A549 (cell line): ENCODE measurements at regions of chr14 and their contacts with region 1.

Region 1: DNA sequence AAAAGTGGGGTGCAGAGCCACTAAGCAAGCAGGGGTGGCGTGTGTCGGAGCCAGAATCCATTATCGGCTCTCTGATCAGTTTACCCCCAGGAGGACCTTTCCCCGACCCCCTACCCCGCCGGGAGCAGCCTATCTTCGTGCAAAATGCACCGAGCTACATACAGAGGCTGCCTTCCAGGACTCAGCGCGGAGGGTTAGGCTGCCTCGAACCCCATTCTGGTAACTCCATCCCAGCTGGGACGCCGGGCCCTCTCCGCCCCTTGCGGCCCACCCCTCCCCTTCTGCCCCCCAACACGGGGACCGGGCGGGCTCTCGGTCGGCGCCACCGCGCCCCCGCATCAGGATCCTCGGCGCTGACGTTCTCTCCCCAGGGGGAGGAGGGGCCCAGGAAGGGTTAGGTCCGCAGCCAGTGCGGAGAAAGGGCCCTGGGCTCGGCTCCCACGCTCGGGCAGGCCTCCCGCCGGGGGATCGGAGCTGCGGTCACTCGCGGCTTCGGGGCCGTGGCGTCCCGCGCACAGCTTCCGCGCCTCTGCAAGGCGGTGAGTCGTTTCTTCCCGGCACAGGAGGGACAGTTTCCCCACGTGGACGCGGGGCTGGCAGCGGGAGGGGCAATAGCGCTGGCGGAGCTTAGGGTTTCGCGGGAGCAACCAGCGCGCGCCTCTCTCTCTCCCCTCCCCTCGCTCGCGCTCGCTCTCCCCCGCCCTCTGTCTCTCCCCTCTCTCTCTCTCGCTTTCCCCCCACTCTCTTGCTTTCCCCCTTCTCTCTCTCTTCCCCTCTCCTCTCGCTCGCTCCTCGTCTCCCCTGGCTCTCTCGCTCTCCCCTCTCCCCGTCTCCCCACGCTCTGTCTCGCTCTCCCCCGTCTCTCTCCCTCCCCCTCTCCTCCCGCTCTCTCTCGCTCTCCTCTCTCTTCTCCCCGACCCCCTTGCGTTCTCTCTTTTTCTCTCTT is 12.5 kb upstream of the MAP3K9 start:
- DNase-seq: peak; percentile 42 to 62
- ATAC-seq: peak; percentile 58 to 71
- H3K4me3 ChIP-seq: peak overlapping the region; percentile 94
- H3K27ac ChIP-seq: peak overlapping the region; percentile 89 to 97
- H3K4me1 ChIP-seq: peaks cover 14% of the 10 kb centered on the region; the same call in 2 of the 3 replicates
- CTCF ChIP-seq: no peak
- EP300 ChIP-seq: no peak
- POLR2A ChIP-seq: no peak; the same call in 1 of the 2 replicates
- RAD21 ChIP-seq: no peak

Region 2: DNA sequence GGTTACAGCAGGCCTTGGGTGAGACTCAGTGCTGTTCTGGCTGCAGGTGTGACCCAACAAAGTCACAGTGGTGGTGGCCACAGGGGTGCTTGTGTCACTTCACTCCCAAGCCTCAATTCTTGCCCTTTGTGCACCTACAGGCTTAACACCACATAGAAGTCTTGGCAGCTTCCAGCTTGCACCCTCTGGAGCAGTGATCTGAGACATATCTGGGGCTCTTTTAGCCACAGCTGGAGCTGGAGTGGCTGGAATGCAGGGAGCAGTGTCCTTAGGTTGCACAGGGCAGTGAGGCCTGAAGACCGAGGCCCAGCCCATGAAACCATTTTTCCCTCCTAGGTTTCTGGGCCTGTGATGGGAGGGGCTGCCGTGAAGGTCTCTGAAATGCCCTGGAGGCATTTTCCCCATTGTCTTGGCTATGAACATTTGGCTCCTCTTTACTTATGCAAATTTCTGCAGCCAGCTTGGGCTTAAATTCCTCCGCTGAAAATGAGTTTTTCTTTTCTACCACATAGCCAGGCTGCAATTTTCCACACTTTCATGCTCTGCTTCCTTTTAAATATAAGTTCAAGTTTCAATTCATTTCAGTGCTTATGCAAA is 332.2 kb before region 1 on chr14:
- CTCF ChIA-PET with region 1: no interaction called
- POLR2A ChIA-PET with region 1: no interaction called
- DNase-seq: no peak
- ATAC-seq: no peak
- H3K4me3 ChIP-seq: no peak overlapping the region
- H3K27ac ChIP-seq: no peak overlapping the region
- H3K4me1 ChIP-seq: no peaks in the 10 kb centered on the region
- CTCF ChIP-seq: no peak
- EP300 ChIP-seq: no peak
- POLR2A ChIP-seq: no peak
- RAD21 ChIP-seq: no peak

Region 3: GRCh38 chr14:70527501-70528105 is 294.3 kb before region 1 on chr14:
- CTCF ChIA-PET with region 1: no interaction called
- POLR2A ChIA-PET with region 1: no interaction called
- DNase-seq: no peak
- ATAC-seq: no peak
- H3K4me3 ChIP-seq: no peak overlapping the region
- H3K27ac ChIP-seq: no peak overlapping the region
- H3K4me1 ChIP-seq: no peaks in the 10 kb centered on the region
- CTCF ChIP-seq: no peak
- EP300 ChIP-seq: no peak
- POLR2A ChIP-seq: no peak
- RAD21 ChIP-seq: no peak

Region 4: GRCh38 chr14:70600382-70601157 is 221.3 kb before region 1 on chr14 and contains the start of gene MED6:
- CTCF ChIA-PET with region 1: interaction called, 18 read pairs
- POLR2A ChIA-PET with region 1: interaction called, 3 read pairs
- DNase-seq: peak; percentile 78 to 94
- ATAC-seq: peak; percentile 97 to 98
- H3K4me3 ChIP-seq: peak within 1 kb of the TSS; percentile 99
- H3K27ac ChIP-seq: peak within 1 kb of the TSS; percentile 93 to 96
- H3K4me1 ChIP-seq: peaks cover 14% of the 10 kb centered on the region
- CTCF ChIP-seq: no peak
- EP300 ChIP-seq: no peak
- POLR2A ChIP-seq: peak; percentile 5; the same call in 1 of the 2 replicates
- RAD21 ChIP-seq: no peak; a peak in 1 of 5 replicates
- polyA plus RNA-seq, gene MED6: 74.6 and 85.5 TPM in 2 replicates

Region 5: DNA sequence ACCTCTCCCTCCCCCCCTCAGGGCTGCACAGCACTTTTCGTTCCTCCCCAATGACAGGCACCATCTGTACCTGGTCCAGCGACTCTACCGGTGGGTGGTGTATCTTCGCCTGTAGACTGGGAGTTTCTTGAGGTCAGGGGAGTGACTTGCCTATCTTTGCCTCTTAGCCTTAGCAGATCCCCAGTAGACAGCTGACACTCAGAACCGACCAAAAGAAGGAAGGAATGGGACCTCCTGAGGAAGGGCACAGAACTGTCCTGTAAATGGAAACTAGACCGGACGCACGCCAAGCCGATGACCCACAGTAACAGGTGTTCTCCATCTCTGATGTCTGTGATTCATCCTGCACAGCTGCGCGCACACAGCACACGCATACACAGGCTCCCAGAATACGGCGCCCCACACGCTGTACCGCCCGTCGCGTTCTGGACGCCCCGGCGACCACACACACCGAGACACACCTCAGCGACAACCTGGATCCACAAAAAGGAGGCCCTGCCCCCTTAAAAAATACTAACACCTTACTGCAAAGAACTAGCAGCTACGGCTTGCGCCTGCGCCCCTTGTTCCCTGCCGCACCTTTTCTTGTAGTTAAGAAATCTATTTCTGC is 180.8 kb before region 1 on chr14:
- CTCF ChIA-PET with region 1: interaction called, 13 read pairs
- POLR2A ChIA-PET with region 1: no interaction called
- DNase-seq: peak; percentile 47 to 61
- ATAC-seq: peak; percentile 86 to 92
- H3K4me3 ChIP-seq: peak overlapping the region; percentile 69
- H3K27ac ChIP-seq: peak overlapping the region; percentile 70 to 92
- H3K4me1 ChIP-seq: peaks cover 11% of the 10 kb centered on the region; the same call in 1 of the 3 replicates
- CTCF ChIP-seq: no peak
- EP300 ChIP-seq: no peak
- POLR2A ChIP-seq: no peak
- RAD21 ChIP-seq: no peak

Region 6: DNA sequence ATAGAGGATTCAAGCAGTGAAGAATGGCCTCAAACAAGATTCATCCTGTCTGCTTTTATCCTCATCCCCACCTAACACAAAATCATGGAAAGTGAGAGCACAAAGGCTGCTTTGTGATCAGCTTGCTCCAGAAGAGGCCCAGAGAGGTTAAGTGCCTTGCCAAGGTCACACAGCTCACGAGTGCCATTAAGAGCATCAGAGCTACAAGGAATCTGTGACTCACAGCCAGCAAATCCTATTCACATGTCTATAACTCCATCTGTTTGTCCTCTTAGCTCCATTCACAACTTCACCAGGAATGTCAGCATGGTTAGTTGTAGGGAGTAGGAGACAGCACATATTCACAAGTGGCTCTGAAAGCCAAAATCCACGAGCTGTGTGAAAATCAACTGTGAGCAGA is 100.3 kb before region 1 on chr14:
- CTCF ChIA-PET with region 1: interaction called, 12 read pairs
- POLR2A ChIA-PET with region 1: no interaction called
- DNase-seq: no peak
- ATAC-seq: no peak
- H3K4me3 ChIP-seq: no peak overlapping the region
- H3K27ac ChIP-seq: no peak overlapping the region
- H3K4me1 ChIP-seq: peaks cover 41% of the 10 kb centered on the region
- CTCF ChIP-seq: no peak
- EP300 ChIP-seq: no peak
- POLR2A ChIP-seq: no peak
- RAD21 ChIP-seq: no peak

Region 7: DNA sequence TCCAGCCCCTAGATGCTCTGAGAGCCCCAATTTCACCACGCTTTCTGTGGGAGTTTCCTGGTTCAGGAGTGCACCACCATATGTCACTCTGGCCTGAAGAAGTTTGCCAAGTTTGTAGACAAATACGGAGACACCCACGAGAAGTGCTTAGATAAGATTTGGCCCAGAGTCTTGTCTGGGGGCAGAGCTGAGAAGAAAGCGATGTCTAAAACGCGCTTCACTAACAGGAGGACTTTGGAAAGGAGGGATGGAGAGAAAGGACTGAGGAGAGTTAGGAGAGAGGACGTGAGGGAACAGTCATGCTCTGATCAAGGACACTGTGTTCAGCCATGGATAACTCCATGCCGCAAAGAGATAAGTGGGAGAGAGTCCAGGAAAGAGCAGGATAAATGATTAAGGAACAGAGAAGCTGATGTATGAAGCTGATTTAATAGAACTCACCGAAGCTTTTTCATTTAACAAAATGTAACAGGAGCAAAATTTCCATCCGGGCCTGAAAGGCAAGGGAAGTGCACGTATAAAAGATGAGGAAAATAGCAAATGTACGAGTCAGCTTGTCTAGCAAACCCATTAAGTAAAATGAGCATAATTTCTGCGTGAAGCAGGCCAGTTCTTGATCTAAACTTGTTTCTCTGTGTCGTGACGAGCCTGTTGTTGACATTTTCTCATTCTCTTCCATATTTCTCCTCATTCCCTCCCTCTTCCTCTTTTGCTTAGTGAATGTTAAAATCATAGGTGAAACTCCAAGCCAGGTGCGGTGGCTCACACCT is 10.9 kb after region 1 on chr14:
- CTCF ChIA-PET with region 1: interaction called, 46 read pairs
- POLR2A ChIA-PET with region 1: no interaction called
- DNase-seq: no peak
- ATAC-seq: no peak
- H3K4me3 ChIP-seq: no peak overlapping the region
- H3K27ac ChIP-seq: no peak overlapping the region
- H3K4me1 ChIP-seq: no peaks in the 10 kb centered on the region
- CTCF ChIP-seq: no peak
- EP300 ChIP-seq: no peak
- POLR2A ChIP-seq: no peak
- RAD21 ChIP-seq: no peak

Region 8: GRCh38 chr14:70955543-70956480 is 134.0 kb after region 1 on chr14:
- CTCF ChIA-PET with region 1: interaction called, 53 read pairs
- POLR2A ChIA-PET with region 1: no interaction called
- DNase-seq: peak in 1 of 2 experiments; percentile 23
- ATAC-seq: peak; percentile 71 to 79; a peak in 5 of 6 replicates
- H3K4me3 ChIP-seq: no peak overlapping the region
- H3K27ac ChIP-seq: no peak overlapping the region
- H3K4me1 ChIP-seq: peaks cover 6% of the 10 kb centered on the region; the same call in 1 of the 3 replicates
- CTCF ChIP-seq: peak; percentile 66
- EP300 ChIP-seq: no peak
- POLR2A ChIP-seq: no peak
- RAD21 ChIP-seq: peak; percentile 72 to 75

Region 9: GRCh38 chr14:71121711-71122110 is 299.9 kb after region 1 on chr14:
- CTCF ChIA-PET with region 1: no interaction called
- POLR2A ChIA-PET with region 1: no interaction called
- DNase-seq: no peak
- ATAC-seq: peak in 1 of 2 experiments; percentile 37; a peak in 2 of 6 replicates
- H3K4me3 ChIP-seq: no peak overlapping the region
- H3K27ac ChIP-seq: no peak overlapping the region
- H3K4me1 ChIP-seq: peaks cover 10% of the 10 kb centered on the region; the same call in 1 of the 3 replicates
- CTCF ChIP-seq: no peak
- EP300 ChIP-seq: no peak
- POLR2A ChIP-seq: no peak
- RAD21 ChIP-seq: no peak